ENCODE measurements at regions of chr2 and their contacts with region 1.

Region 1: GRCh38 chr2:31523871-31524492 is 56.8 kb downstream of the SRD5A2 start:
- DNase-seq: peak in 1 of 2 donors; percentile 23
- ATAC-seq: no peak
- H3K4me3 ChIP-seq: no peak overlapping the region
- H3K27ac ChIP-seq: no peak overlapping the region
- H3K4me1 ChIP-seq: no peaks in the 10 kb centered on the region
- H3K27me3 ChIP-seq: peaks cover 0 to 22% (median 0%) of the 10 kb centered on the region in 7 donors
- CTCF ChIP-seq: peak; percentile 31 to 82 (median 69)

Region 2: GRCh38 chr2:31401580-31401979 is 122.4 kb before region 1 on chr2:
- intact Hi-C with region 1: loop called in 1 of 10 experiments (anchors 10 kb)
- DNase-seq: no peak
- ATAC-seq: no peak
- H3K4me3 ChIP-seq: no peak overlapping the region
- H3K27ac ChIP-seq: no peak overlapping the region
- H3K4me1 ChIP-seq: no peaks in the 10 kb centered on the region
- H3K27me3 ChIP-seq: peaks cover 0 to 3% (median 0%) of the 10 kb centered on the region in 7 donors
- CTCF ChIP-seq: no peak

Region 3: DNA sequence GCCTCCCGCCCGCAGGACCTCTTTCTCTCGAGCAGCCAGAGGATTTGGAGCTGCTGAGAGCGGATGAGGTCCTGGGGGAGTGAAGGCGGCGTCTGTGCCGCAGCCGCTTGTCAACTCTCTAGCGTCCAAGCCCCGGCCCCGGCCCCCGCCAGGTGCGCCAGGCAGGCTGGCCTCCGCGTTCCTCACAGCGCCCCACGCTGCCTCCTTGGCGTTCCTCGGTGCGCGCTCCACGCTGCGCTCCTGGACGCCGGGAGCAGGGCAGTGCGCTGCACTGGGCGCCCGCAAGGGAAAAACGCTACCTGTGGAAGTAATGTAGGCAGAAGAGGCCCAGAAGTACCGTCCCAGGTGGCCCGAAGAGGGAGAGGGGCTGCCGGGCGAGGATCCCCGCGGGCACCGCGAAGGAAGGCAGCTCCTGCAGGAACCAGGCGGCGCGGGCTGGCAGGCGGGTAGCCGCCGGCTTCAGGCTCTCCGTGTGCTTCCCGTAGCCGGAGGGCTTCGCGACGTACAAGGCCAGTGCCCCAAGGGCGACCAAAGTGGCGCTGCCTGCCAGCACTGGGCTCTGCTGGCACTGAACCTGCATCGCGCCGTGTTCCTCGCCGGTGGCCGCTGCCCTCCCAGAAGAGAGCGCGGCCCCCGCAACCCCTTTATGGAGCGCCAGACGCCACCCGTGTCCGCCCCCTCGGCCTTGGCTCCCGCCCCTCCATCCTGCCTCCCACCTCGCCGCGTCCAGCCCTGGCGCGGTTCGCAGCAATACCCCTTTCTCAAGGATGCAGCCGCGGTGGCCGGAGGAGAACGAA is 56.5 kb after region 1 on chr2 and contains the start of gene SRD5A2:
- intact Hi-C with region 1: no loop called
- DNase-seq: no peak
- ATAC-seq: peak in 1 of 8 donors; percentile 31
- H3K4me3 ChIP-seq: no peak within 1 kb of the TSS
- H3K27ac ChIP-seq: no peak within 1 kb of the TSS
- H3K4me1 ChIP-seq: peaks cover 0 to 6% (median 0%) of the 10 kb centered on the region in 9 donors
- H3K27me3 ChIP-seq: peaks cover 5 to 51% (median 40%) of the 10 kb centered on the region in 7 donors
- CTCF ChIP-seq: no peak
- total RNA-seq, gene SRD5A2: not detected

Region 4: DNA sequence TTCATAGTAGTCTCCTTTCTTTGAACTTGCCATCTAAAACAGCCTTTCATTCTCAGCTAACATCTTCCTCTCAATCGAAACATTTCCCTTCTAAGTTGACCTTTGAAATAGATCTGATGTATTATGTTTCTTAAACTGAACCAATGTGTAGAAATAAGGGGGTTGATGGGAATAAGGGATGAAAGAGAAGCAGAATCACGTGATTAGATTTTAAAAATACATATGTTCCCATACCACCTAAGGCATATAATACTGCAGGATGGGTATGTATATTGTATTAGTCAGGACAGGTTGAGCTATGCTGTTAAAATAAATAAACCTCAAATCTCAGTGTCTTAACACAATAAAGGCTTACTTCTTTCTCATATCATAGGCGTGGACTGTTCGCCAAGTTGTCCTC is 264.3 kb after region 1 on chr2:
- intact Hi-C with region 1: no loop called
- DNase-seq: no peak
- ATAC-seq: no peak
- H3K4me3 ChIP-seq: no peak overlapping the region
- H3K27ac ChIP-seq: no peak overlapping the region
- H3K4me1 ChIP-seq: no peaks in the 10 kb centered on the region
- H3K27me3 ChIP-seq: no peaks in the 10 kb centered on the region
- CTCF ChIP-seq: no peak